Heart right ventricle (tissue), 16 donors: ENCODE measurements at regions of chr4 and their contacts with region 1.

Region 1: DNA sequence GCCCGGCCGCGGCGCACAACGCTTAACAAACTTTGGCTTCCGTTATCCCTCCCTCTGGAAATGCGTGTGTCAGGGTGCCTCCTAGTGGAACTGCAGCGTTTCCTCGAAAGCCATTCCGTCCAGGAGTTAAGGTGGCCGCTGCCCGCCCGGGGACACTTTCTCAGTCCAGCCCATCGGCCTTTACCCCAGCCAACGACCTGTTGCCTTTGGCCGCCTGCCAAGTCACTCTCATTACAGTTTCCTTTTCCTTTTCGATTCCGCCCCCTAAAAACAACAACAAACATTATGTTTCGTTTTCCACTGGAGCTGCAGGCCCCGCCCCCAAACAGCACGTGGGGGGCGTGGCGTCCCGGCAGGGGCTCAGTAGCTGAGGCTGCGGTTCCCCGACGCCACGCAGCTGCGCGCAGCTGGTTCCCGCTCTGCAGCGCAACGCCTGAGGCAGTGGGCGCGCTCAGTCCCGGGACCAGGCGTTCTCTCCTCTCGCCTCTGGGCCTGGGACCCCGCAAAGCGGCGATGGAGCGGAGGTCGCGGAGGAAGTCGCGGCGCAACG is at the start of gene HERC5:
- DNase-seq: peak; percentile 91 to 97
- ATAC-seq: peak; percentile 95 to 98 (median 97)
- H3K4me3 ChIP-seq: peak within 1 kb of the TSS; percentile 55 to 84 (median 73)
- H3K27ac ChIP-seq: peak within 1 kb of the TSS in 9 of 10 donors; percentile 52 to 87 (median 78)
- H3K4me1 ChIP-seq: peaks cover 0 to 28% (median 12%) of the 10 kb centered on the region in 9 donors
- H3K27me3 ChIP-seq: no peaks in the 10 kb centered on the region
- CTCF ChIP-seq: peak; percentile 32 to 87 (median 66)
- total RNA-seq, gene HERC5: 1.6 to 4.7 (median 2.9) TPM

Region 2: DNA sequence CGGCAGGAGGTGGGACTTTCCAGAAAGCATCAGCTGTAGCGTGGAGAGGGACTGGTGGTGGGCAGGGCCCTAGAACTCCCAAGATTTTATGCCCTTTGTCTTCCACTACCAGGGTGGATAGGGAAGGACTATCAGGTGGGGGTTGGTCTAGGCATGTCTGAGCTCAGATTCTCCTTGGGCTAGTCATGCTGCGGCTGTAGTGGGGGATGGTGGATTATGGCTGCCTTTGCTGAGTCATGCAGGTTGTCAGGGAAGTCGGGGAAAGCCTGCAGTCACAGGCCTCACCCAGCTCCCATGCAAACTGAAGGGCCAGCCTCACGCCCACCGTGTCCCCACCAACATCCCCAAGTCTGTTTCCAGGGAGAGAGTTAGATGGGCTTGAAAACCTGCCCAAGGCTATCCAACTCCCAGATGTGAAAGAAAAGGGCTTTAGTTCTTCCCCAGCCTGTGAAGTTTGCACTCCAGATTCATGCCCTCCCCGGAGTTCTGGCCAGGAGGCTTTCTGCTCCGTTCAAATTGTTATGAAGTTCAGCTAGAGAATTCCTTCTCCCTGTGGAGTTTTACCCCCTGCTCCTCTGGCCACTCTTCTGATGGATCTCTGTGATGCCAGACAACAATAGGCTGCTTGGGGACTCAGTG is 637.4 kb before region 1 on chr4:
- intact Hi-C with region 1: no loop called
- DNase-seq: no peak
- ATAC-seq: no peak
- H3K4me3 ChIP-seq: no peak overlapping the region
- H3K27ac ChIP-seq: no peak overlapping the region
- H3K4me1 ChIP-seq: no peaks in the 10 kb centered on the region
- H3K27me3 ChIP-seq: no peaks in the 10 kb centered on the region
- CTCF ChIP-seq: no peak

Region 3: GRCh38 chr4:88217920-88218319 is 238.9 kb before region 1 on chr4:
- intact Hi-C with region 1: loop called in 5 of 10 experiments (anchors 2 to 5 kb)
- DNase-seq: no peak
- ATAC-seq: no peak
- H3K4me3 ChIP-seq: no peak overlapping the region
- H3K27ac ChIP-seq: no peak overlapping the region
- H3K4me1 ChIP-seq: peaks cover 0 to 3% (median 0%) of the 10 kb centered on the region in 9 donors
- H3K27me3 ChIP-seq: no peaks in the 10 kb centered on the region
- CTCF ChIP-seq: no peak

Region 4: DNA sequence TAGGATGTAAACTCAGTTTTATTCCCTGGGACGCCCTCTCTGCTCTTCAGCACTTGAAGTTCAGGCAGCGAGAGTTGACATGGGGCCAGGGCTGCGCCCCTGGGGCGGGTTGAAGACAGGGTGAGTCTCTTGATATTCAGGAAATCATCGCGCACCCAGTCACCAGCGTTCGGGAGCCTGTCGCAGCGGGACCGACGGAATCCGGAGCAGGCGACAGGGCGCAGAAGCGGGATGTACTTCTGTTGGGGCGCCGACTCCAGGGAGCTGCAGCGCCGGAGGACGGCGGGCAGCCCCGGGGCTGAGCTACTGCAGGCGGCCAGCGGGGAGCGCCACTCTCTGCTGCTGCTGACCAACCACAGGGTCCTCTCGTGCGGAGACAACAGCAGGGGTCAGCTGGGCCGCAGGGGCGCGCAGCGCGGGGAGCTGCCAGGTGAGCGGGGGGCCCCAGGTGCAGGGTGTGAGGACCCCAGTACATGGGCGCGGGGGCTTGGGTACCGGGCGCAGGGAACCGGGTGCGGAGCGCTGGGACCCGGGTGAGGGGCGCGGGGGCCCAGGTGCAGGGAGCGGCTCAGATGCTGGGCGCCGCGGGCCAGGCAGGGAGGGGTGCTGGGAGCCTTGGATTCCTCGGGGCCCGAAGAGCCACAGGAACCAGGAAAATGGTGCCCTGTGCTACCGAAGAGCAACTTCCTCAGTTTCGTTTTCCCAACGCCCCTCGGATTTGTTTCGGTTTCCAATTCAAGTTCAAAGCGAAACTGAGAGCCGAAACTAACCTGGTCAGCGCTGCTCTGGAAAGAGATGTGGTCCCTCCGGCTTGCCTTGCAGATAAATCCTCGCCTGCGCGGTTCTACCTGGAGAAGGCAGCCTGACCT is 77.9 kb before region 1 on chr4 and contains the start of gene HERC6:
- intact Hi-C with region 1: loop called in 6 of 10 experiments (anchors 1 to 5 kb)
- DNase-seq: peak; percentile 74 to 85
- ATAC-seq: peak; percentile 94 to 98 (median 96)
- H3K4me3 ChIP-seq: peak within 1 kb of the TSS; percentile 91 to 100 (median 96)
- H3K27ac ChIP-seq: peak within 1 kb of the TSS; percentile 95 to 100 (median 98)
- H3K4me1 ChIP-seq: peaks cover 0 to 14% (median 0%) of the 10 kb centered on the region in 9 donors
- H3K27me3 ChIP-seq: no peaks in the 10 kb centered on the region
- CTCF ChIP-seq: peak; percentile 50 to 89 (median 80)
- total RNA-seq, gene HERC6: 8.9 to 20.0 (median 15.8) TPM